Ovary (tissue), 10 donors: ENCODE measurements at regions of chr1 and their contacts with region 1.

Region 1: GRCh38 chr1:202462342-202463076 is 114.0 kb downstream of the PPP1R12B start:
- DNase-seq: no peak
- H3K4me3 ChIP-seq: no peak overlapping the region
- H3K27ac ChIP-seq: no peak overlapping the region
- H3K4me1 ChIP-seq: no peaks in the 10 kb centered on the region
- H3K27me3 ChIP-seq: no peaks in the 10 kb centered on the region
- CTCF ChIP-seq: no peak
- EP300 ChIP-seq: no peak
- POLR2A ChIP-seq: no peak

Region 2: DNA sequence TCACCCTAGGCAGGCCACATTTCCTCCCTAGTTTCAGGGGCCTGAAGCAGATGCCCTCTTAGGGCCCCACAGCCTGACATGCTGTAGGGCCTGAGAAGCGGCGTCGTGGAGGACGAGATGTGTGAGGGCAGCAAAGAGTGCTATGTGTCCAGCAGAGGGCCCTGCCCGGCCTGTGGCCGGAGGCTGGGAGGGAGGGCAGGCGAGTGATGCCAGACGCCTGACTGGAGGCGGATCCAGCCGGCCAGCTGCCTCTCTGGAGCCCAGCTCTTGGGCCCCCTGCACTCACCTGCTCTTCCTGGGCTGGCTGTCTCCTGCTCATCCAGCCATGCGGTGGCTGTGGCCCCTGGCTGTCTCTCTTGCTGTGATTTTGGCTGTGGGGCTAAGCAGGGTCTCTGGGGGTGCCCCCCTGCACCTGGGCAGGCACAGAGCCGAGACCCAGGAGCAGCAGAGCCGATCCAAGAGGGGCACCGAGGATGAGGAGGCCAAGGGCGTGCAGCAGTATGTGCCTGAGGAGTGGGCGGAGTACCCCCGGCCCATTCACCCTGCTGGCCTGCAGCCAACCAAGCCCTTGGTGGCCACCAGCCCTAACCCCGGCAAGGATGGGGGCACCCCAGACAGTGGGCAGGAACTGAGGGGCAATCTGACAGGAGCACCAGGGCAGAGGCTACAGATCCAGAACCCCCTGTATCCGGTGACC is 339.7 kb before region 1 on chr1 and contains the start of gene GPR37L1:
- intact Hi-C with region 1: no loop called
- DNase-seq: peak in 4 of 5 donors; percentile 56 to 79 (median 58)
- H3K4me3 ChIP-seq: no peak within 1 kb of the TSS
- H3K27ac ChIP-seq: no peak within 1 kb of the TSS
- H3K4me1 ChIP-seq: no peaks in the 10 kb centered on the region
- H3K27me3 ChIP-seq: no peaks in the 10 kb centered on the region
- CTCF ChIP-seq: peak in 2 of 3 donors; percentile 12 to 39
- EP300 ChIP-seq: no peak
- POLR2A ChIP-seq: no peak
- total RNA-seq, gene GPR37L1: 0.10 to 0.34 (median 0.13) TPM in 5 of 7 donors, not detected in the others

Region 3: GRCh38 chr1:202247894-202248681 is 214.4 kb before region 1 on chr1:
- intact Hi-C with region 1: no loop called
- DNase-seq: peak in 1 of 5 donors; percentile 3
- H3K4me3 ChIP-seq: no peak overlapping the region
- H3K27ac ChIP-seq: no peak overlapping the region
- H3K4me1 ChIP-seq: no peaks in the 10 kb centered on the region
- H3K27me3 ChIP-seq: no peaks in the 10 kb centered on the region
- CTCF ChIP-seq: no peak
- EP300 ChIP-seq: no peak
- POLR2A ChIP-seq: no peak

Region 4: DNA sequence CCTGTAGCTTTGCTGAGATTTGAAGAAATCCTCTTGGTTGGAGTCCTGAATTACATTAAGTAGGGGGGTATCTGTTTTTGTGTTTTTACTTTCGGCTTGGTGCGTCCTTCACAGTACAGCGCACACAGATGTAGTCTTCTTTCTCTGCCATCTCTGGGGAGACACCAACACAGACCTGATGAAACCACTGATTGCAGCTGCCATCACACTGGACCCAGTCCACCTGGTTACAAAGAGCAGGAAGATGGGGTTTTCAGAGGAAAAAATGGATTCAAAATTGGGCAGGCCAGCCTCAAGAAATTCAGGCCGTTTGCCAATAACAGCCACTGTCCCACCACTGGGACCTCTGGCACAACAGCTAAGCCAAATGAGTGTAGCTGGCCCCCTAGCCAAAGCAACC is 266.4 kb after region 1 on chr1:
- intact Hi-C with region 1: loop called in 1 of 4 experiments (anchors 10 kb)
- DNase-seq: no peak
- H3K4me3 ChIP-seq: no peak overlapping the region
- H3K27ac ChIP-seq: no peak overlapping the region
- H3K4me1 ChIP-seq: no peaks in the 10 kb centered on the region
- H3K27me3 ChIP-seq: no peaks in the 10 kb centered on the region
- CTCF ChIP-seq: no peak
- EP300 ChIP-seq: no peak
- POLR2A ChIP-seq: no peak